Right ventricle myocardium inferior (tissue), 1 donor: ENCODE measurements at regions of chr15 and their contacts with region 1.

Region 1: DNA sequence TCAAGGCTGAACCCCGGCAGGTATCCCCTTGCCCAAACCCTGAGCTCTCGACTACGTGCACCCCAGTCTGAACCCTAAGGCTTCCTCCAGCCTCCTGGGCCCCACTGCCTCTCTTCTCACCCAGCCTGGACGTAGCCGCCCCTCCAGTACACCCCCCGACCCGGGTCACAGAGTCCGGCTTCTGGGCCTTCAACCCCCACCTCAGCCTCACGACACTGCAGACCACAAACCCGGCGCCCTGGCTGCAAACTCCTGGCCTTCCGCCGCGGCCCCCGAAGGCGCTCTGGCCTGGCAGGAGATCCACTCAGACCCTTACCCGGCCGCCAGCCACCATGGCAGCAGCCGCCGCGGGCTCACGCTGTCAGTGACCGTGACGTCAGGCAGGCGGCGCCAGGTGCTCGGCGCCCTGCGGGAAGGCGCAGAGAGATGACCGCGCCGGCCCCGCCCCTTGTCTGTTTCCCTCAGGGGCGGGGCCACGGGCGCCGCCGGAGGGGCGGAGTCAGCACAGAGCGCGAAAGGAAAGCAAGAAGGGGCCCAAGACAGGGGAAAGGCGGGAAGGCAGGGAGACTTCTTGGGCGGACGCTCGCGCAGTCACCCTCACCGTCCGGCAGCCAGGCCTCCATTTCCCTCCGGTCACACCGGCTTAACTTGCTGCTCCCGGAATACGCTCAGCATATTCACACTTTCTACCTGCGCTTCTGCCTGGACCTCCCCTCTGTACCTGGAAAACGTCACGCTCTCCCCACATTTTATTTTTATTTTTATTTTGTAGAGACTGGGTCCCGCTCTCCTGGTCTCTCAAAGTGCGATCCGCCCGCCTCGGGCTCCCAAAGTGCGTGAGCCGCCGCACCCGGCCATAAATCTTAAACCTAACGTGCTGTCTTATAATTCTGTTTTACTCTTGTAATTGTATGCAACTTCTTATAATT is at the start of gene RMDN3:
- DNase-seq: peak; percentile 98
- ATAC-seq: peak; percentile 99
- total RNA-seq, gene RMDN3: 19.1 TPM

Region 2: GRCh38 chr15:40534371-40534770 is 220.8 kb before region 1 on chr15:
- intact Hi-C with region 1: no loop called
- DNase-seq: no peak
- ATAC-seq: no peak

Region 3: DNA sequence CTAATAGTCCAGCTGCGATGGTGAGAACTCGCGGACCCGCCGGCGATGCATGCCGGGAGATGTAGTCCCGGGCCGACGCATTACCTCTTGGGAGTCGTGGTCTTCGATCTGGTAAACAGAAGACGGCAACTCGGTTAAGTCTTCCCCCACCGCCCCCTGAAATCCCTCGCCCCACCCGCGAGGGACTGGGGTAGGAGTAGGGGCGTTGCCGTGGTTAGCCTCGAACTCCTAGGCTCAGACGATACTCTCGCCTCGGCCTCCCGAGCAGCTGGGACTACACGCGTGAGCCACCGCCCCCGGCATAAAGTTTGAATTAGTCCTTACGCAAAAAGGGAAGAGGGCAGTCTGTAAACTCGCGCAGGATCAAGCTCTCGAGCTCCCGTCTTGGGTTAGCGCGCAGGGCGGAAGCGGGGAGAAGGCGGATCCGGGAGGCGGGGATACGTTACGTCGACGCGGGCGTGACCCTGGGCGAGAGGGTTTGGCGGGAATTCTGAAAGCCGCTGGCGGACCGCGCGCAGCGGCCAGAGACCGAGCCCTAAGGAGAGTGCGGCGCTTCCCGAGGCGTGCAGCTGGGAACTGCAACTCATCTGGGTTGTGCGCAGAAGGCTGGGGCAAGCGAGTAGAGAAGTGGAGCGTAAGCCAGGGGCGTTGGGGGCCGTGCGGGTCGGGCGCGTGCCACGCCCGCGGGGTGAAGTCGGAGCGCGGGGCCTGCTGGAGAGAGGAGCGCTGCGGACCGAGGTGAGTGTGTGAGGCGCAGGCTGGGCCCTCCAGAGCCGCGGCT is 60.3 kb before region 1 on chr15 and contains the start of gene RAD51:
- intact Hi-C with region 1: loop called (anchors 1 kb)
- DNase-seq: peak; percentile 97
- ATAC-seq: peak; percentile 98
- total RNA-seq, gene RAD51: 2.0 TPM

Region 4: DNA sequence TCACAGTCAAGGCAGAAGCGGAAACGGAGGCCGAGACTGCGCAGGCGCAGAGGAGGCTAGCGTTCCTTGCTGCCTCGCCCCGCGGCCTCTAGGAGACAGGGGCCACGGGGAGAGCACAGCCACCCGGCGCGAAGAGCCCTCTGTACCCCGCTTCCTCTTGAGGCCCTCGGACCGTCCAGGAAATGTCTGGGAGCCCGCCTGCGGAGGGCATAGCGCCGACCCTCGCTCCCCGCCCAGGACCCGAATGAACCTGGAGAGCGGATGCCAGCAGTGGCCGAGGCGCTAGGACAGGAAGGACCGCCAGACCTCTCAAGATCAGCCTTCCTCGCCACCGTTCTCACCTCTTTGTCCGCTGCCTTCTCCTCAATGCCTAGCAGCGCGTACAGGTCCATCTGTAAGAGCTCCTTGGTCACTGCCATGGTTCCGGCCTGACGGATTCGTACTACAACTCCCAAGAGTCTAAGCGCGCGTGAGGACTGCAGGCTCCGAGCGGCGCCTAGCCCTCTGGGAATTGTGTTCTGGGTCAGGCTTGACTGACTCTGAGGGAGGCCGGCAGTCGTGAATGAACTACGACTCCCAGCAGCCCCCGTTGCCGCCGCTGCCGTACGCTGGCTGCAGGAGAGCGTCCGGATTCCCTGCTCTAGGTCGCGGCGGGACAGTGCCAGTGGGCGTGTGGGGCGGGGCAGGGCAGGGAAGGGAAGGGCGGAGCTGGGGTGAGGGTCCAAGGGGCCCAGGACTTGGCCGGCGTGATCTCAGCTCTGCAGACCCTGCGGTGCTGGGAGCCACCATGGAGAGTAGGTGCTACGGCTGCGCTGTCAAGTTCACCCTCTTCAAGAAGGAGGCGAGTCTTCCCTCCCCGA is 52.1 kb after region 1 on chr15 and contains the starts of genes DNAJC17 and ZFYVE19:
- intact Hi-C with region 1: loop called (anchors 1 kb)
- DNase-seq: peak; percentile 99
- ATAC-seq: peak; percentile 99
- total RNA-seq, gene DNAJC17: 19.7 TPM
- total RNA-seq, gene ZFYVE19: 27.6 TPM

Region 5: GRCh38 chr15:41387646-41388045 is 632.5 kb after region 1 on chr15:
- intact Hi-C with region 1: no loop called
- DNase-seq: no peak
- ATAC-seq: no peak